MCF 10A (cell line): ENCODE measurements at regions of chr10 and their contacts with region 1.

Region 1: GRCh38 chr10:128035557-128035973 is 90.7 kb downstream of the MKI67 start:
- DNase-seq: peak; percentile 64
- H3K4me3 Mint-ChIP-seq: no peak overlapping the region
- H3K27ac Mint-ChIP-seq: no peak overlapping the region
- H3K4me1 Mint-ChIP-seq: peaks cover 22% of the 10 kb centered on the region
- H3K27me3 Mint-ChIP-seq: no peaks in the 10 kb centered on the region
- CTCF ChIP-seq: peak; percentile 82

Region 2: GRCh38 chr10:127906548-127907377 is 128.8 kb before region 1 on chr10 and contains the start of gene PTPRE:
- CTCF ChIA-PET with region 1: interaction called, 28 read pairs
- POLR2A ChIA-PET with region 1: no interaction called
- intact Hi-C with region 1: no loop called
- DNase-seq: peak; percentile 69
- H3K4me3 Mint-ChIP-seq: peak within 1 kb of the TSS; percentile 62
- H3K27ac Mint-ChIP-seq: no peak within 1 kb of the TSS
- H3K4me1 Mint-ChIP-seq: peaks cover 7% of the 10 kb centered on the region
- H3K27me3 Mint-ChIP-seq: no peaks in the 10 kb centered on the region
- CTCF ChIP-seq: peak; percentile 90
- total RNA-seq, gene PTPRE: 21.8 and 34.6 TPM in 2 replicates

Region 3: GRCh38 chr10:128018236-128018635 is 17.3 kb before region 1 on chr10:
- CTCF ChIA-PET with region 1: interaction called, 37 read pairs
- POLR2A ChIA-PET with region 1: no interaction called
- intact Hi-C with region 1: no loop called
- DNase-seq: no peak
- H3K4me3 Mint-ChIP-seq: no peak overlapping the region
- H3K27ac Mint-ChIP-seq: no peak overlapping the region
- H3K4me1 Mint-ChIP-seq: no peaks in the 10 kb centered on the region
- H3K27me3 Mint-ChIP-seq: no peaks in the 10 kb centered on the region
- CTCF ChIP-seq: no peak

Region 4: GRCh38 chr10:128064108-128064969 is 28.8 kb after region 1 on chr10:
- CTCF ChIA-PET with region 1: interaction called, 354 read pairs
- POLR2A ChIA-PET with region 1: interaction called, 12 read pairs
- intact Hi-C with region 1: loop called (anchors 1 kb)
- DNase-seq: peak; percentile 97
- H3K4me3 Mint-ChIP-seq: peak overlapping the region; percentile 57
- H3K27ac Mint-ChIP-seq: peak overlapping the region; percentile 95
- H3K4me1 Mint-ChIP-seq: peaks cover 31% of the 10 kb centered on the region
- H3K27me3 Mint-ChIP-seq: no peaks in the 10 kb centered on the region
- CTCF ChIP-seq: no peak

Region 5: GRCh38 chr10:128087884-128088709 is 52.5 kb after region 1 on chr10:
- CTCF ChIA-PET with region 1: interaction called, 13 read pairs
- POLR2A ChIA-PET with region 1: interaction called, 3 read pairs
- intact Hi-C with region 1: no loop called
- DNase-seq: peak; percentile 43
- H3K4me3 Mint-ChIP-seq: no peak overlapping the region
- H3K27ac Mint-ChIP-seq: no peak overlapping the region
- H3K4me1 Mint-ChIP-seq: no peaks in the 10 kb centered on the region
- H3K27me3 Mint-ChIP-seq: no peaks in the 10 kb centered on the region
- CTCF ChIP-seq: no peak

Region 6: GRCh38 chr10:128150045-128150493 is 114.5 kb after region 1 on chr10:
- CTCF ChIA-PET with region 1: interaction called, 43 read pairs
- POLR2A ChIA-PET with region 1: no interaction called
- intact Hi-C with region 1: loop called (anchors 2 kb)
- DNase-seq: peak; percentile 72
- H3K4me3 Mint-ChIP-seq: peak overlapping the region; percentile 56
- H3K27ac Mint-ChIP-seq: no peak overlapping the region
- H3K4me1 Mint-ChIP-seq: peaks cover 15% of the 10 kb centered on the region
- H3K27me3 Mint-ChIP-seq: peaks cover 6% of the 10 kb centered on the region
- CTCF ChIP-seq: peak; percentile 93

Region 7: GRCh38 chr10:128186959-128187787 is 151.6 kb after region 1 on chr10:
- CTCF ChIA-PET with region 1: no interaction called
- POLR2A ChIA-PET with region 1: no interaction called
- intact Hi-C with region 1: no loop called
- DNase-seq: no peak
- H3K4me3 Mint-ChIP-seq: no peak overlapping the region
- H3K27ac Mint-ChIP-seq: no peak overlapping the region
- H3K4me1 Mint-ChIP-seq: no peaks in the 10 kb centered on the region
- H3K27me3 Mint-ChIP-seq: peaks cover 69% of the 10 kb centered on the region
- CTCF ChIP-seq: no peak